Vagina (tissue), 2 donors: ENCODE measurements at regions of chrX and their contacts with region 1.

Region 1: DNA sequence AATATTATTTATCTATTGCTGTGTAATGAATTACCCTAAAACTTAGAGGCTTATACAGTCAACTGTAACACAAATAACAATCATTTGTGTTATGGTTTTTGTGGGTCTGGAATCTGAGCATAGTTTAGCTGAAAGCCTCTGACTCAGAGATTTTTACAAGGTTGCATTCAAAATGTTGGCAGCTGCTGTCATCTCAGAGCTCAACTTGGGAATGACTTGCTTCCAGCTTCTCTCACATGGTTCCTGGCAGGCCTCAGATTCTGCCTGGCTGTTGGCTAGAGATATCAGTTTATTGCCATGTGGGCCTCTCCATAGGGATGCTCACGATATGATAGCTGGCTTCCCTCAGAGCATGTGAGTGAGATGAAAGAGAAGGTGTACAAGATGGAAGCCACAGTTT is 70.2 kb upstream of the BRWD3 start:
- DNase-seq: no peak
- H3K4me3 ChIP-seq: no peak overlapping the region
- H3K27ac ChIP-seq: no peak overlapping the region
- H3K4me1 ChIP-seq: no peaks in the 10 kb centered on the region
- H3K27me3 ChIP-seq: no peaks in the 10 kb centered on the region
- CTCF ChIP-seq: no peak
- POLR2A ChIP-seq: no peak

Region 2: GRCh38 chrX:79462458-79462857 is 1417.5 kb before region 1 on chrX:
- intact Hi-C with region 1: loop called (anchors 5 kb)
- DNase-seq: no peak
- H3K4me3 ChIP-seq: no peak overlapping the region
- H3K27ac ChIP-seq: no peak overlapping the region
- H3K4me1 ChIP-seq: no peaks in the 10 kb centered on the region
- H3K27me3 ChIP-seq: no peaks in the 10 kb centered on the region
- CTCF ChIP-seq: no peak
- POLR2A ChIP-seq: no peak

Region 3: DNA sequence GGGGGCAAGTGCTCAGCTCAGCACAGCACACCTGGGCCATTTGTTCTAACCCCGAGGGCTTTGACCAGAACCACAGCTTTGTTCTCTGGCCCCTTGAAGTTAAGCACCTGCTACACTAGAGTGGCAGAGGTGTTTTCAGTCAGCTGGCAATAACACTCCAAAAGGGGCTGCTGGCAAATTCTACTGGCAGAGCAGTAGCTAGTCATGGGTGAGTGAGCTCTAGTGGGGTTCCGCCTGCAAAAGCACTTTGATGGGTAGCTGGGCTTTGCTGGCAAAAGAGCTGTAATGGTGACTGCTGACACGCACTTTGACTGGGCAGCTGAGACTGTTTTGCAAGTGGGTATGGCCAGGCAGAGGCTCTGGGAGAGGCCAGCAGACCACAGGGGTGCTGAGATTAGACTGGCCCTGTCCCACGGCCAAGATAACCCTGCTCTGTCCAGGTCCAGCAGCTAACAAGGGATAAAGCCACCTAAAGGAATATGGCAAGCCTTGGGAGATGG is 524.9 kb before region 1 on chrX:
- intact Hi-C with region 1: no loop called
- DNase-seq: no peak
- H3K4me3 ChIP-seq: no peak overlapping the region
- H3K27ac ChIP-seq: no peak overlapping the region
- H3K4me1 ChIP-seq: no peaks in the 10 kb centered on the region
- H3K27me3 ChIP-seq: no peaks in the 10 kb centered on the region
- CTCF ChIP-seq: no peak
- POLR2A ChIP-seq: no peak